Caco-2 (cell line): ENCODE measurements at regions of chr2 and their contacts with region 1.

Region 1: DNA sequence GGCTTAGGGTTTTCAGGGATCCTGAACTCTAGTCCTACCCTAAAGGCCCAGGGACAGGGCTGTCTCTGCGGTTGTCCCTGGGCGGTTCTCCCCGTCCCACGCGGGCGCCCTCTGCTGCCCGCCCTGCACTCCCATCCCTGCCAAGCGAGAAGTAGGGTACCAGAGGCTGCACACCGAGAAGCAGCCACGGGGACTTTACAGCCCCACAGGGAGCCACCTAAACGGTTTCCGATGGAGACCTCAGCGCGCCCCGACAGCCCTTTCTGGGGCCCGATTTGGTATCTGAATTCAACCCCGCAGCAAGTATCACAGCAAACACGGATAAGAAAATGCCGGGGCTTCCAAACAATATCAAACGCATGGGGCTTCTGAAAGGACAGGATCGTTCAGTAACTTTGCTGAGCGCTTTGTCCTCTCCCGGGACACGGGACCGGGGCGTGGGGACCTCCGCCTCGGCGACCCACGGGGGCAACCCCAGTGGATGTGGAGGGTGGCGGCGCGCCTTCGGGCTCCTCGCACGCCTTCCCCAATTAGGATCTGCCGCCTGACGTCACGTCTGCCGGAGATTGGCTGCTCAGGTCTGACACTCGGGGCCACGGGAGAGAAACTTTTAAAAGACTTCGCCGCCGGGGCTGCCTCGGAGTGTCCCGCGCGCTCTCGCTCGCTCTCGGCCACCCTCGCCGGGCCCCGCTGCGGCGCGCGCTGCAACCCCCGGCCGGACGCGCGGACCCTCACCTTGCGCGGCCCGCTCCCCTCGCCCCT is at the start of gene LTBP1:
- DNase-seq: peak; percentile 79 to 84
- H3K4me3 ChIP-seq: peak within 1 kb of the TSS; percentile 71
- H3K4me3 Mint-ChIP-seq: peak within 1 kb of the TSS; percentile 79
- H3K27ac Mint-ChIP-seq: peak within 1 kb of the TSS; percentile 69
- H3K4me1 ChIP-seq: peaks cover 8% of the 10 kb centered on the region; the same call in 1 of the 2 replicates
- H3K4me1 Mint-ChIP-seq: peaks cover 7% of the 10 kb centered on the region
- H3K27me3 ChIP-seq: no peaks in the 10 kb centered on the region
- H3K27me3 Mint-ChIP-seq: no peaks in the 10 kb centered on the region
- CTCF ChIP-seq: peak; percentile 83 to 94
- total RNA-seq, gene LTBP1: 64.2 and 64.9 TPM in 2 replicates

Region 2: DNA sequence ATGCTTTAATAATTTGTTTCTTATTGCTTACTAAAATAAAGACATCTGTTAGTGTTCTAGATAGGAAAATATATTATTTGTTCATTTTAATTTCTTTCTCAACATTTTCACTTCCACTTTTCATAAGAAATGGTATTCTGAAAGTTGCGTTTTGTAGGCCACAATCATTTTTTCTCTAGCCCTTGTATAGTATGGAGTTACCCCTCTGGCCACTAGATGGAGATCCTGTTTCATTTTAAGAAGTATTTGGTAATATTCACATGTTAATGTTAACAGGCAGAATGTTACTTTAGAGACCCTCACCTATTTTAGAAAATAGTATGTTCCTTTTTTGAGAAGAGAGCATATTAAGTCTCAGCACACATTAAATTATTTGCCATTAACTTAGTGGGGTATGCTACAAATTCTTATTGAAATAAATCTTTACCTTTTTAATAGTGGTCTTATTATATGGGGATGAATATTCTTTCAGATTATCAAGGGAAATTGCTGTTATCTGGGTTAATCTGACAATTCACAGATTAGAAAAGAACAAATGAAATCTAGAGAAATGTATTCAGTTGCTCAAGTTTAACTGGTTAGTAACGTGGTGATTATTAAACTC is 392.6 kb before region 1 on chr2:
- CTCF ChIA-PET with region 1: no interaction called
- POLR2A ChIA-PET with region 1: no interaction called
- intact Hi-C with region 1: loop called (anchors 5 kb)
- DNase-seq: peak in 1 of 2 experiments; percentile 35
- H3K4me3 ChIP-seq: no peak overlapping the region
- H3K4me3 Mint-ChIP-seq: no peak overlapping the region
- H3K27ac Mint-ChIP-seq: no peak overlapping the region
- H3K4me1 ChIP-seq: no peaks in the 10 kb centered on the region
- H3K4me1 Mint-ChIP-seq: no peaks in the 10 kb centered on the region
- H3K27me3 ChIP-seq: no peaks in the 10 kb centered on the region
- H3K27me3 Mint-ChIP-seq: no peaks in the 10 kb centered on the region
- CTCF ChIP-seq: peak; percentile 62 to 88

Region 3: GRCh38 chr2:32805104-32805766 is 141.3 kb before region 1 on chr2:
- CTCF ChIA-PET with region 1: no interaction called
- POLR2A ChIA-PET with region 1: no interaction called
- intact Hi-C with region 1: loop called (anchors 1 kb)
- DNase-seq: peak; percentile 75 to 81
- H3K4me3 ChIP-seq: no peak overlapping the region
- H3K4me3 Mint-ChIP-seq: peak overlapping the region; percentile 2
- H3K27ac Mint-ChIP-seq: peak overlapping the region; percentile 65
- H3K4me1 ChIP-seq: peaks cover 34% of the 10 kb centered on the region
- H3K4me1 Mint-ChIP-seq: peaks cover 37% of the 10 kb centered on the region
- H3K27me3 ChIP-seq: no peaks in the 10 kb centered on the region
- H3K27me3 Mint-ChIP-seq: no peaks in the 10 kb centered on the region
- CTCF ChIP-seq: no peak

Region 4: DNA sequence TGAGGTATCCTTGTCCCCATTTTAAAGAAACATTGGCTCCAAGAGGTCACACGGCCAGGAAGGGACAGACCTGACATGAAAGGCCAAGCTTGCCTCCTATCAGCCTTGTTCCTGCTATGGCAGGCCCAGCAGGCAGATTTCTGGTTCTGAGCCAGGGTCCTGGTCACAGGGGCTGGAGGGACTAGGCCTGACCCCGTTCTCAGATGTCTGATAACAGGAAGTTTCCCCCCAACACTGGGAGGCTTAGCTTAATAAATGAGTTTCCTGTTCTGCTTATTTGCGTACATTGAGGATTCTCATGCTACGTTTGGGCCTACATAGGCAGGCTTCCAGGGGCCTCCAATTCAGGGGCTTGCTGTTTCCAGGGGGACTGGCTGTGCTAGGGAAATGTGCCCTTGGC is 107.5 kb before region 1 on chr2:
- CTCF ChIA-PET with region 1: no interaction called
- POLR2A ChIA-PET with region 1: no interaction called
- intact Hi-C with region 1: no loop called
- DNase-seq: no peak
- H3K4me3 ChIP-seq: no peak overlapping the region
- H3K4me3 Mint-ChIP-seq: no peak overlapping the region
- H3K27ac Mint-ChIP-seq: no peak overlapping the region
- H3K4me1 ChIP-seq: peaks cover 24% of the 10 kb centered on the region
- H3K4me1 Mint-ChIP-seq: peaks cover 45% of the 10 kb centered on the region
- H3K27me3 ChIP-seq: no peaks in the 10 kb centered on the region
- H3K27me3 Mint-ChIP-seq: no peaks in the 10 kb centered on the region
- CTCF ChIP-seq: no peak

Region 5: DNA sequence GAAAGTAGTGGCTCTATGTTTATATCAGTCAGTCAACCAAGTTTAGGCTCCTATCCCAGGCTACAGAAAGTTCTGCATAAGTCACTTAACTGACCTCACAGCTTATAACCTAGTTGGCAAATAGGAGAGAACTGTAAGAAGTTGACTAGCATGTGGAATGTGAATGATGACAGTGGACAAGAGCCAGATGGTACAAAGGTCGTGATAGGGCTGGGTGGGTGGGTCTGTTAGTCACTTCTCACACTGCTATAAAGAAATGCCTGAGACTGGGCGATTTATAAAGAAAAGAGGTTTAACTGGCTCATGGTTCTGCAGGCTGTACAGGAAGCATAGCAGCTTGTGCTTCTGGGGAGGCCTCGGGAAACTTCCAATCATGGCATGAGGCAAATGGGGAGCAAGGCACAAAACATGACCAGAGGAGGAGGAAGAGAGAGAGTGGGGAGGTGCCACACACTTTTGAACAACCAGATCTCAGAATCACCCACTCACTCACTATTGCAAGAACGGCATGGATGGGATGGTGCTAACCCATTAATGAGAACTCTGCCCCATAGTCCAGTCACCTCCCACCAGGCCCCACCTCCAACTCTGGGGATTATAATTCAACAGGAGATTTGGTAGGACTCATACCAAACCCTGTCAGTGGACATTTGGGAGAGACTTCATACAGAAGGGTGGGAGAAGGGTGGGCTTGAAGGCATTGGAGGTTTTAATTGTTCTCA is 69.1 kb after region 1 on chr2:
- CTCF ChIA-PET with region 1: no interaction called
- POLR2A ChIA-PET with region 1: interaction called, 5 read pairs
- intact Hi-C with region 1: loop called (anchors 2 kb)
- DNase-seq: peak; percentile 67
- H3K4me3 ChIP-seq: no peak overlapping the region
- H3K4me3 Mint-ChIP-seq: peak overlapping the region; percentile 43
- H3K27ac Mint-ChIP-seq: peak overlapping the region; percentile 87
- H3K4me1 ChIP-seq: peaks cover 46% of the 10 kb centered on the region
- H3K4me1 Mint-ChIP-seq: peaks cover 36% of the 10 kb centered on the region
- H3K27me3 ChIP-seq: no peaks in the 10 kb centered on the region
- H3K27me3 Mint-ChIP-seq: no peaks in the 10 kb centered on the region
- CTCF ChIP-seq: no peak

Region 6: DNA sequence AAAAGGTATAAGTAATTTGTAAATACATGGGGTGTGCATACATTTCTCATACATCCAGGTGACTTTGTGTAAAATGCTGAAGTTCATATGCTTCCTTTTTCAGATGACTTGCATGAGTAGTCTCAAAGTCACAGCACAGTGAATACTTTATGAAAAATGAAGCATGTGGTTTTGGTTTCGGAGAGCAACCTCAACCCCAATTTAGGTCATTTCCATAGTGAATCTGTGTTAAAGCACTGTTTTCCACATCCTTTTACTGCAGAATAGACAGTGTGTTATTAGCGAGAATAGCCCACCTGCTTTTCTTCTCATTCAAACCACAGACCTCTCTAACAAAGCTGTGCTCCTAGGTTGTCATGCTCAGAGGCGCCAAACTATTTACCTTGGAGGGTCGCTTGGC is 325.5 kb after region 1 on chr2:
- CTCF ChIA-PET with region 1: no interaction called
- POLR2A ChIA-PET with region 1: no interaction called
- intact Hi-C with region 1: loop called (anchors 5 kb)
- DNase-seq: no peak
- H3K4me3 ChIP-seq: no peak overlapping the region
- H3K4me3 Mint-ChIP-seq: no peak overlapping the region
- H3K27ac Mint-ChIP-seq: no peak overlapping the region
- H3K4me1 ChIP-seq: 0 out of 2 replicates have a peak, but pooled peaks cover 4% of the 10 kb centered on the region
- H3K4me1 Mint-ChIP-seq: peaks cover 17% of the 10 kb centered on the region
- H3K27me3 ChIP-seq: no peaks in the 10 kb centered on the region
- H3K27me3 Mint-ChIP-seq: no peaks in the 10 kb centered on the region
- CTCF ChIP-seq: no peak